CD14-positive monocyte (primary cell): ENCODE measurements at regions of chr7 and their contacts with region 1.

Region 1: GRCh38 chr7:64183126-64183742 is 23.8 kb upstream of the ZNF735 start:
- DNase-seq: no peak
- H3K4me3 ChIP-seq: no peak overlapping the region
- H3K4me3 Mint-ChIP-seq: no peak overlapping the region
- H3K27ac ChIP-seq: no peak overlapping the region
- H3K27ac Mint-ChIP-seq: no peak overlapping the region
- H3K4me1 ChIP-seq: no peaks in the 10 kb centered on the region
- H3K4me1 Mint-ChIP-seq: no peaks in the 10 kb centered on the region
- H3K27me3 ChIP-seq: no peaks in the 10 kb centered on the region
- H3K27me3 Mint-ChIP-seq: peaks cover 0 to 9% (median 0%) of the 10 kb centered on the region in 3 donors
- CTCF ChIP-seq: peak; percentile 75

Region 2: GRCh38 chr7:64313740-64314491 is 130.7 kb after region 1 on chr7 and contains the start of gene ZNF736:
- intact Hi-C with region 1: no loop called
- DNase-seq: peak; percentile 86 to 91 (median 89)
- H3K4me3 ChIP-seq: peak within 1 kb of the TSS; percentile 77 to 92 (median 91)
- H3K4me3 Mint-ChIP-seq: peak within 1 kb of the TSS; percentile 97 to 100
- H3K27ac ChIP-seq: peak within 1 kb of the TSS; percentile 81 to 98
- H3K27ac Mint-ChIP-seq: peak within 1 kb of the TSS; percentile 98 to 100 (median 100)
- H3K4me1 ChIP-seq: peaks cover 15 to 19% of the 10 kb centered on the region in 2 donors
- H3K4me1 Mint-ChIP-seq: peaks cover 23% of the 10 kb centered on the region
- H3K27me3 ChIP-seq: no peaks in the 10 kb centered on the region
- H3K27me3 Mint-ChIP-seq: peaks cover 0 to 1% (median 0%) of the 10 kb centered on the region in 3 donors
- CTCF ChIP-seq: no peak
- polyA plus RNA-seq, gene ZNF736: 1.3 to 7.1 (median 1.4) TPM

Region 3: DNA sequence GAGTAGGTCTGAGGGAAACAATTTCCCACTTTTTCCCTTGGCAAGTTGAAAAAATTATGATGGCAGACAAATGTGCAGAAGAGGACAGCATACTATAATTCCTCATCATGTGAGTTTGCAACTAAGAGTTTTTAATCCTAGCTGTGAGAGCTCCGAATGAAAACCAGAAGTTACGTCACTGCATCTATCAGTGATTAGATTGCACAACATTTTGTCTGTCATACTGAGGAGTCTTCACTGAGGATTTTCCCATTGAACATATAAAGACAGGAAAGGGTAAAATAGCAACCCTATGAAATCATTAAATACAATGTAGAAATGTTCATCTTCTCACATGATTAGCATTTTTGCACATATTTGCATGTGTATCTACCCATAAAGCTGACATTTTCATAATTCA is 176.3 kb after region 1 on chr7:
- intact Hi-C with region 1: no loop called
- DNase-seq: no peak
- H3K4me3 ChIP-seq: no peak overlapping the region
- H3K4me3 Mint-ChIP-seq: no peak overlapping the region
- H3K27ac ChIP-seq: no peak overlapping the region
- H3K27ac Mint-ChIP-seq: no peak overlapping the region
- H3K4me1 ChIP-seq: no peaks in the 10 kb centered on the region
- H3K4me1 Mint-ChIP-seq: no peaks in the 10 kb centered on the region
- H3K27me3 ChIP-seq: no peaks in the 10 kb centered on the region
- H3K27me3 Mint-ChIP-seq: peaks cover 0 to 2% (median 0%) of the 10 kb centered on the region in 3 donors
- CTCF ChIP-seq: no peak

Region 4: GRCh38 chr7:64618785-64619456 is 435.7 kb after region 1 on chr7:
- intact Hi-C with region 1: loop called in 1 of 2 experiments (anchors 5 kb)
- DNase-seq: peak in 1 of 3 donors; percentile 1
- H3K4me3 ChIP-seq: no peak overlapping the region
- H3K4me3 Mint-ChIP-seq: no peak overlapping the region
- H3K27ac ChIP-seq: no peak overlapping the region
- H3K27ac Mint-ChIP-seq: no peak overlapping the region
- H3K4me1 ChIP-seq: no peaks in the 10 kb centered on the region
- H3K4me1 Mint-ChIP-seq: no peaks in the 10 kb centered on the region
- H3K27me3 ChIP-seq: no peaks in the 10 kb centered on the region
- H3K27me3 Mint-ChIP-seq: peaks cover 0 to 2% (median 0%) of the 10 kb centered on the region in 3 donors
- CTCF ChIP-seq: peak; percentile 49